Vagina (tissue), 2 donors: ENCODE measurements at regions of chr10 and their contacts with region 1.

Region 1: GRCh38 chr10:52004342-52004949 is 305.1 kb upstream of the CSTF2T start:
- DNase-seq: no peak
- H3K4me3 ChIP-seq: no peak overlapping the region
- H3K27ac ChIP-seq: no peak overlapping the region
- H3K4me1 ChIP-seq: no peaks in the 10 kb centered on the region
- H3K27me3 ChIP-seq: no peaks in the 10 kb centered on the region
- CTCF ChIP-seq: peak; percentile 10 to 33 (median 25)
- POLR2A ChIP-seq: no peak

Region 2: GRCh38 chr10:51001587-51001986 is 1002.9 kb before region 1 on chr10:
- intact Hi-C with region 1: loop called (anchors 5 kb)
- DNase-seq: no peak
- H3K4me3 ChIP-seq: no peak overlapping the region
- H3K27ac ChIP-seq: no peak overlapping the region
- H3K4me1 ChIP-seq: no peaks in the 10 kb centered on the region
- H3K27me3 ChIP-seq: no peaks in the 10 kb centered on the region
- CTCF ChIP-seq: peak in 2 of 3 experiments; percentile 52 to 57
- POLR2A ChIP-seq: no peak